ENCODE measurements at regions of chr2 and their contacts with region 1.

Region 1: GRCh38 chr2:235263205-235264122 is 230.4 kb upstream of the AGAP1 start:
- DNase-seq: peak; percentile 74
- H3K4me3 ChIP-seq: peak overlapping the region; percentile 15
- H3K27ac ChIP-seq: peak overlapping the region; percentile 72
- H3K4me1 ChIP-seq: peaks cover 6% of the 10 kb centered on the region
- H3K27me3 ChIP-seq: no peaks in the 10 kb centered on the region
- CTCF ChIP-seq: no peak

Region 2: DNA sequence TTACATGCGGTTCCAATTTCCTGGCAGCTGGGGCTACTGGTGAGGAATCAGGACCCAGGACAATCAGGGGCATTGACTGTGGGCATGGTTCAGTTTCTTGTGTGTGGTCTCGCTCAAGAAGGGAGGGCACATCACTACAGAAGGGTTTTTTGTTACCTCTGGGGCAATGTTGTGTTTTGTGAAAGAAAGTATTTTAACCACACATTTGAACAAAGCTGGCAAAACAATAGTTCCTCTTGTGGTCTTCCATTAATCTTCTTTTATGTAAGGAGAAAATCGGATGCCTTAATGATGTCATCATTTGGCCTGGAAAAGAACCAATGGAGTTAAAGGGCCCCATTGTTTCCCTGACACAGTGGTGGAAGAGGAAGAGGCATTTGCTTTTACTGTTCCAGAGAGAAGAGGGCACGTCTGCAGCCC is 114.2 kb before region 1 on chr2:
- intact Hi-C with region 1: loop called (anchors 10 kb)
- DNase-seq: no peak
- H3K4me3 ChIP-seq: no peak overlapping the region
- H3K27ac ChIP-seq: peak overlapping the region; percentile 74
- H3K4me1 ChIP-seq: peaks cover 3% of the 10 kb centered on the region
- H3K27me3 ChIP-seq: no peaks in the 10 kb centered on the region
- CTCF ChIP-seq: no peak